ENCODE measurements at regions of chr5 and their contacts with region 1.

Region 1: DNA sequence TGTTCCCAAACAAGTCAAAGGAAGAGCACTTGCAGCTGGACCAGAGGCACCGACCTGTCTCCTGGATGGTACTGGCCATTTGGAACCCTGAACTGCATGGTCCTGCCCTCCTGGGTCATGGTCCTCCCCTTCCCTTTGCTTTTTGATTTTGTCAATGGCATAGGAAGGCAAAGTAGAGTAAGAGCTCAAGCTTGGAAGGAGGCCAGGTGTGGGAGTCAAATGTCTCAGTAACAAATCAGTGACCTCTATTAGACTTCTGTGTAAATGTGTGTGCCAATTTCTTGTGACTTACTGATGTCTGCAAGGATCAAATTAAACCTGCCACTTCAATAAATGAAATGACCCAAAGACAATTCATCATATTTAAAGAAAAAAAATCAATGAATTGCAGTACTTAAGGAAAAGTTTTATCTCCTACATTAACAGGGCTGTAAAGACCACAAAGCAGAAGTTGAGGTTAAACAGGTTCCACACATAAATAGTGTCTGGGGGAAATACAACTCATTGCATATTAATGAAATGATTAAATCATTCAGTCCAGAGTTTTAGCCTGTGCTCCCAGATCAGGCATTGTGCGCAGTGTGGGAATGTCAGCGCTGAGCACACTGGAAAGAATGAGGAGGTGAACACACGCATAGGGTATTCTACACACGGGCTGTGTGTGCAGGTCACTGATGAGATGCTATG is 32.7 kb downstream of the OSMR start:
- DNase-seq: no peak

Region 2: DNA sequence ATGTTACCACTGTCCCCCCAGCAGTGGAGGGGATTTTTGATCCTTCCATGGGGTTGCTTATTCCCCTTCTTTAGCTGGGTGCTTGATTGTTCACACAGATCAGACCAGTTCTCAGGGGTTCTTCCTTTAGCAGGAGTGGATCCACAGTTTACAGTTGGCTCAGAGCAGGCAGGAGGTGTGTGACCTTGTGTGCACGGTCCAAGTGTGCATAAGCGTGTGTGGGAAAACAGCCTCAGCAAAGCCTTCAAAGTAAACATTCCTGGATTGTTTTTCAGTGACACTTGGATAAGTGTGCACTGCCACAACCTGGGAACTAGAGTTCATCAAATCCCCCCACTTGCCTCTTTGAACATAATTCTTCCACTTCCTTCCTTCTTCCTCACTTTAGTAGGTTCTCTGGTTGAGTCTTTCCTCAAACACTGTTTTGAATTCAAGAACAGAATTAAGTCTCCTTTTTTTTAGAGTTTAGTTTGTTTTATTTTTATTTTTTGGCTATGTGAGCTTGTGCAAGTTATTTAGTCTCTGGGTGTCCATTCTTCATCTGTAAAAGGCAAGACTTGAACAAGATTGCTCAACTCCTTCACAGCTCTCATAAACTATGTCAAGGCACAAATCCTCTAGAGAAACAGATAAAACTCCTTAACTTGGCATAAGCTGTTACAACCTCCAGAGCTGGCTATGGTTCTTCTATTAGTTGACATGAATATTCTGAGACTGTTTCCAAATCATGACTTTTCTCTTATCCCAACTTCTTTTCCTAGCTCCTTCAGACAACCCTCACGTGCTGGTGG is 45.3 kb after region 1 on chr5:
- intact Hi-C with region 1: loop called in 1 of 2 experiments (anchors 1 kb)
- DNase-seq: no peak

Measured in posterior vena cava (tissue), 2 donors.